ENCODE measurements at regions of chr1 and their contacts with region 1.

Region 1: GRCh38 chr1:203216274-203217138 is 13.0 kb downstream of the CHIT1 start:
- DNase-seq: peak; percentile 60
- ATAC-seq: peak; percentile 80
- H3K4me3 ChIP-seq: no peak overlapping the region
- H3K27ac ChIP-seq: no peak overlapping the region
- H3K4me1 ChIP-seq: peaks cover 0 to 12% of the 10 kb centered on the region in 2 experiments; a peak in 1 of 4 replicates
- H3K27me3 ChIP-seq: no peaks in the 10 kb centered on the region
- CTCF ChIP-seq: peak; percentile 59 to 94 (median 80)
- POLR2A ChIP-seq: no peak
- RAD21 ChIP-seq: peak; percentile 94

Region 2: DNA sequence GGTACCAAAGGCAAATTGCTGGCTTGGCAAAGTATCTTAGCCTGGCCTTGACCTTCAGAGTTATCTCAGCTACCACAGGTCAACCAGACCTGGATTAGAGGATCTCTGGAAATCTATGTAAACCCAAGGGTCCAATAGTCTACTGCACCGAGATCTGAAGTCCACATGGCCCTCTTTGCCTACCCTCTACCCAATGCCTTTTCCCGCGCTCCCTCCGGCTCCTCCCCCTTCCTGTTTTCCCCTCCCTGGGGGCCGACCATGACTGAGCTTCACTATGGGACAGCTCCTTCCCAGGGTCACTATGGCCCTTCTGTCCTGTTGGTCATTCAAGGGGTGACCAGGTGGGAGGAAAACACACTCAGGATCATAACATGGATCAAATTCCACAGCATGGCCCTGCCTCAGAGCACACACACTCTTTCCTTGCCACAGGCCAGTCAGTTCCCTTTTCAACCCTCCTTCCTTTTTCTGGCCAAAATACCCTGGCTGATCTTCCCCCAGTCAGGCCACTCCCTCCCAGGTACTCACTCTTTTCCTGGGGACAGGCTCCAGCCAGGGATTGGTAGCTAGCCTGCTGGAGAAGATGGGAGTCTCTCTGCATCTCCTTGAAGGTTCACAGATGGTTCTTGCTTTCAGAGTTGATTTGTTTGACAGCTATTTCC is 228.5 kb before region 1 on chr1:
- CTCF ChIA-PET with region 1: no interaction called
- POLR2A ChIA-PET with region 1: no interaction called
- RAD21 ChIA-PET with region 1: no interaction called
- intact Hi-C with region 1: no loop called
- DNase-seq: no peak
- ATAC-seq: no peak
- H3K4me3 ChIP-seq: no peak overlapping the region
- H3K27ac ChIP-seq: no peak overlapping the region
- H3K4me1 ChIP-seq: peaks cover 0 to 2% of the 10 kb centered on the region in 2 experiments; a peak in 2 of 4 replicates
- H3K27me3 ChIP-seq: no peaks in the 10 kb centered on the region
- CTCF ChIP-seq: no peak
- POLR2A ChIP-seq: no peak
- RAD21 ChIP-seq: no peak

Region 3: GRCh38 chr1:203031467-203031866 is 185.0 kb before region 1 on chr1:
- CTCF ChIA-PET with region 1: interaction called, 12 read pairs
- POLR2A ChIA-PET with region 1: no interaction called
- RAD21 ChIA-PET with region 1: no interaction called
- intact Hi-C with region 1: loop called (anchors 2 kb)
- DNase-seq: no peak
- ATAC-seq: no peak
- H3K4me3 ChIP-seq: no peak overlapping the region
- H3K27ac ChIP-seq: no peak overlapping the region
- H3K4me1 ChIP-seq: peaks cover 4 to 6% of the 10 kb centered on the region in 2 experiments; a peak in 1 of 4 replicates
- H3K27me3 ChIP-seq: no peaks in the 10 kb centered on the region
- CTCF ChIP-seq: peak; percentile 36 to 87 (median 49); a peak in 5 of 6 replicates
- POLR2A ChIP-seq: no peak
- RAD21 ChIP-seq: peak; percentile 30; the same call in 1 of the 2 replicates

Region 4: GRCh38 chr1:203038891-203039608 is 177.5 kb before region 1 on chr1:
- CTCF ChIA-PET with region 1: interaction called, 111 read pairs
- POLR2A ChIA-PET with region 1: interaction called, 4 read pairs
- RAD21 ChIA-PET with region 1: interaction called, 8 to 19 read pairs
- intact Hi-C with region 1: loop called (anchors 1 kb)
- DNase-seq: no peak
- ATAC-seq: peak; percentile 92
- H3K4me3 ChIP-seq: no peak overlapping the region
- H3K27ac ChIP-seq: no peak overlapping the region
- H3K4me1 ChIP-seq: peaks cover 0 to 22% of the 10 kb centered on the region in 2 experiments; a peak in 2 of 4 replicates
- H3K27me3 ChIP-seq: no peaks in the 10 kb centered on the region
- CTCF ChIP-seq: peak; percentile 83 to 97 (median 92)
- POLR2A ChIP-seq: no peak
- RAD21 ChIP-seq: peak; percentile 89

Region 5: DNA sequence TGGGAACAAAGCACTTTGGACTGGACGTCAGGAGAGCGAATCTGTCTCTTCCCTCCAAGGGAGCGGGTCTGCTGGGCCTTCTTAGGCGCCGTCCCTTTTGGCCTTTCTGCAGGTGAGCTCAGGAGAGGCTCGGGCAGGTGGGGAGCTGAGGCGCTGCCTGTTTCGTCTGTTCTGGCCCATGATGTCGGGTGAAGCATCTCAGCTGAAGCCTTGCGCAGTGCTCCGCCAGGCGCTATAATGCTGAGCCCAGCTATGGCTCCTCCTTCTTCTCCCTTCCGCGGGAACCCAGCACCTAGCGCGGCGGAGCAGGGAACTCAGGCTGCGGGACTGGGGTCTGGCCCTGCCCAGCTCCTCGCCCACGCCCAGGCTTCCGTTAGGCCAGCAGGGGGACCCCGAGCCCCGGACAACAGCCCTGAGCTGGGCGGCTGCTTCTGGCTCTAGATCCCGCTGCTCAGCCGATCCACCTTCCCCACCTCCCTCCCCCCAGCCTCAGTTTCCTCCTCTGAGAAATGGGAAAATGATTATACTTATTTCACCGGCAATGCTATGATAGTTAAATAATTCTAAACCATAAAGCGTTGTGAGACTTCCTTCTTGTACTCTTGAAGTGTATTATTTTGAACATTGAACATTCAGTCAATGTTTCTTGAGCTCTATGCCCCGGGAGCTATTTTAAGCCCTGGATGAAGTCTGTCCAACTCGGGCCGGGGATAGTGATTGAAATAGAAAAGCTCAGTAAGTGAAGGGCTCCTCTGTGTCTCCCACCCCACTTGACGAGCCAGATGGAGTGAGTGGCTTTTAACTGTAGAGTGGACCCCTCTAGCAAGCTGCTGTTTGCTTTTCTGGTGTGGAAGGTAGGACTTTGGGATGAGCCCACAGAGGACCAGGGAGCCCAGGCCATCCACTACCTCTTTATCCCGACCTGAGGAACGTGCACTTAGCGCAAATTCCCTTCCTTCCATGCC is 98.6 kb before region 1 on chr1:
- CTCF ChIA-PET with region 1: interaction called, 82 read pairs
- POLR2A ChIA-PET with region 1: interaction called, 4 read pairs
- RAD21 ChIA-PET with region 1: interaction called, 15 to 18 read pairs
- intact Hi-C with region 1: loop called (anchors 1 kb)
- DNase-seq: peak; percentile 52
- ATAC-seq: peak; percentile 100
- H3K4me3 ChIP-seq: no peak overlapping the region
- H3K27ac ChIP-seq: no peak overlapping the region
- H3K4me1 ChIP-seq: peaks cover 0 to 10% of the 10 kb centered on the region in 2 experiments; a peak in 1 of 4 replicates
- H3K27me3 ChIP-seq: peaks cover 21% of the 10 kb centered on the region; the same call in 1 of the 2 replicates
- CTCF ChIP-seq: peak; percentile 79 to 87 (median 80)
- POLR2A ChIP-seq: no peak
- RAD21 ChIP-seq: peak; percentile 95

Region 6: DNA sequence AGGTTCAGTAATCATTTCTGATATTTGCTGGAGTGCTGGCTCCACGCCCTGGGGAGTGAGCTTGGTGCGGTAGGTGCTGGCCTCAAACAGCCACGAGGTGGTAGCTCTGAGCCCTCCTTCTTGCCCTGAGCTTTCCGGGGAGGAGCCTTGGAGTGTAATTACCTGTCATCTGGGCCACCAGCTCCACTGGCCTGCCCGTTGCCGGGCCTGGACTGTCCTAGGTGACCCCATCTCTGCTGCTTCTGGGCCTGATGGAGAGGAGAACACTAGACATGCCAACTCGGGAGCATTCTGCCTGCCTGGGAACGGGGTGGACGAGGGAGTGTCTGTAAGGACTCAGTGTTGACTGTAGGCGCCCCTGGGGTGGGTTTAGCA is 50.0 kb before region 1 on chr1:
- CTCF ChIA-PET with region 1: interaction called, 12 read pairs
- POLR2A ChIA-PET with region 1: no interaction called
- RAD21 ChIA-PET with region 1: interaction called, 6 to 13 read pairs
- intact Hi-C with region 1: loop called (anchors 1 kb)
- DNase-seq: no peak
- ATAC-seq: peak; percentile 97
- H3K4me3 ChIP-seq: no peak overlapping the region
- H3K27ac ChIP-seq: no peak overlapping the region
- H3K4me1 ChIP-seq: peaks cover 2 to 26% of the 10 kb centered on the region in 2 experiments; a peak in 3 of 4 replicates
- H3K27me3 ChIP-seq: no peaks in the 10 kb centered on the region
- CTCF ChIP-seq: peak; percentile 44 to 64 (median 56)
- POLR2A ChIP-seq: no peak
- RAD21 ChIP-seq: peak; percentile 62

Region 7: DNA sequence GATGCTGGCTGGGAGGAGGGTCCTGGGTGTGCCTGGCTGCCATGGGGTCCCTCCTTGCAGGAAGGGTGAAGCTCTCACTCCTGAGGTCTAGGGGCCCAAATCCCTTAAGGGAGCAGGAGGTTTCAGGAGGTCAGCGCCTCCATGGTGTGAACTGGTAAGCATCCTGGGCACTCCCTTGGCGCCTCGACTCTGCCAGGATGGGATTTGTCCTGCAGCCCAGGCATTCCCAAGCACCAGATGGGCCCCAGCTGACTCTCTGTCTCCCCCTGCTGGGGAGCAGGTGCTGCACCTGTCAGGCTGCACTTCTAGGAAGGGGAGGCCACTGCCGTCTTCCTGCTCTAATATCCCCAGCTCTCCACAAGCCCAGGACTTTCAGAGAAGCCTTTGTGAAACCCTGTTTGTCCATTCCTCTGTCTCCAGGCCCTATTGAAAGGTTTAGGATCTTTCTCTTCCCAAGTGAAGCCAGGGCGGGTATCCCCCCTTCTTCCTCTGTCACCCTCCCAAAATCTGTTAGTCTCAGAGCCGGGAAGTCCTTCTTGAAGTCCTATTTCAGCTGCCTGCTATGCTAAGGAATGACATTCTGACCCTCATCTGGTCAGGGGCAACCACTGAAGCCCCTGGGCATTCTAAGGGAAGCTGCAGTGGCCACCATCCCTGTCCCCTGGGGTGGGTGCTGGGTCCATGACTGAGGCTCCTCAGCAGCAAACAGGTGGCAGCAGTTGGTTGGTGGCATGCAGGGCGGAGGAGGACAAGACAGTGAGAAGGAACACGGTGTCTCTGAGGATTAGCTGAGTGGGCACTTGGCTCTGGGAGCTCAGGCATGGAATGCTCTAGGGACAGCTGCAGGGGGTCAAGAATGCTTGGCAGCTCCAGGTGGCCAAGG is 44.1 kb before region 1 on chr1:
- CTCF ChIA-PET with region 1: interaction called, 17 read pairs
- POLR2A ChIA-PET with region 1: no interaction called
- RAD21 ChIA-PET with region 1: interaction called, 5 to 7 read pairs
- intact Hi-C with region 1: no loop called
- DNase-seq: no peak
- ATAC-seq: peak; percentile 87
- H3K4me3 ChIP-seq: no peak overlapping the region
- H3K27ac ChIP-seq: no peak overlapping the region
- H3K4me1 ChIP-seq: peaks cover 18 to 67% of the 10 kb centered on the region in 2 experiments
- H3K27me3 ChIP-seq: no peaks in the 10 kb centered on the region
- CTCF ChIP-seq: peak; percentile 75 to 93 (median 84)
- POLR2A ChIP-seq: no peak
- RAD21 ChIP-seq: peak; percentile 78

Measured in HCT116 (cell line).